Right cardiac atrium (tissue), 5 donors: ENCODE measurements at regions of chr17 and their contacts with region 1.

Region 1: DNA sequence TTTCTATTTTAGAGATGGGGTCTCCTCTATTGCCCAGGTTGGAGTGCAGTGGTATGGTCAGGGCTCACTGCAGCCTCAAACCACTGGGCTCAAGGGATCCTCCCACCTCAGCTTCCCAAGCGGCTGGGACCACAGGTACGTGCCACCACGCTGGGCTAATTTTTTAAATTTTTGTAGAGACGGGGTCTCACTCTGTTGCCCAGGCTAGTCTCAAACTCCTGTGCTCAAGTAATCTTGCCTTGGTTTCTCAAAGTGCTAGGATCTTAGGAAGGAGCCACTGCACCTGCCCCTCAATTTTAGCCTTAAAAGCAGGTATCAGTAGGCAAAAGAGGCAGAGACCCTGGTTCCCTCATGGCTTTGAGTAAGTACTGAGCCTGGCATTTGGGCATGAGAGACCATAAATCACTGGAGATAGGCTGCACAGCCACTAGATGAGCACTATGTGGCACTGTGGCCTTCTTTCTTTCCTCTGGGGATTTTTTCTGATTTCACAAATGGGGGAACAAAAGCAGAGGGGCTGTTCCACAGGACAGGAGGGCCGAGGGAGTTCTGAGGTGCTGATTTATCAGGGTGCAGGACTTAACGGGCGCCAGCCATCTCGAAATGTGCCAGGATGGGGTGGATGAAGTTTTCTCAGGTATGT is 82.2 kb downstream of the PLXDC1 start:
- DNase-seq: no peak
- ATAC-seq: peak; percentile 54 to 70
- H3K4me3 ChIP-seq: no peak overlapping the region
- H3K27ac ChIP-seq: no peak overlapping the region
- H3K4me1 ChIP-seq: no peaks in the 10 kb centered on the region
- H3K27me3 ChIP-seq: no peaks in the 10 kb centered on the region

Region 2: GRCh38 chr17:39144416-39144840 is 75.2 kb after region 1 on chr17:
- intact Hi-C with region 1: loop called in 1 of 4 experiments (anchors 5 kb)
- DNase-seq: peak; percentile 91 to 94 (median 92)
- ATAC-seq: peak; percentile 87
- H3K4me3 ChIP-seq: no peak overlapping the region
- H3K27ac ChIP-seq: peak overlapping the region; percentile 26
- H3K4me1 ChIP-seq: peaks cover 2% of the 10 kb centered on the region
- H3K27me3 ChIP-seq: no peaks in the 10 kb centered on the region

Region 3: DNA sequence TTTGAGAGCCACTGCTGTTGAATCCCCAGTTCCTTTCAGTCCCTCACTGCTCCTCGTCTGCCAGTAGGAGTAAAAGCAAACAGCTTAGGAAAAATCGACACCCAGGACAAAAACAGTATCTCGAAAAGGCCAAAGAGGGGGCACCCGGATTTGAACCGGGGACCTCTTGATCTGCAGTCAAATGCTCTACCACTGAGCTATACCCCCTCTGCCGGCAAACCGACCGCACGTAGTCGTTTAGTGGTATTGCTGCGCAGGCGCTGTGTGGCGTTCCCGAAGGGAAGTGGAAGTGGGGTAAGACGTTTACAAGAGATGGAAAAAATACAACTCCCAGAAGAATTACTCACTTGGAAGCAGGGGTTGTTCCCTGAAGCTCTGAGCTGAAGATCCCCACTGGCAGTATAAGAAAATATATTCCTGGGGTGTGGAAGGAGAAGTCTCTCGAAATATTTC is 84.4 kb after region 1 on chr17:
- intact Hi-C with region 1: loop called in 2 of 4 experiments (anchors 2 to 5 kb)
- DNase-seq: peak; percentile 85 to 97 (median 94)
- ATAC-seq: peak; percentile 87 to 89
- H3K4me3 ChIP-seq: peak overlapping the region; percentile 89
- H3K27ac ChIP-seq: peak overlapping the region; percentile 77
- H3K4me1 ChIP-seq: peaks cover 5% of the 10 kb centered on the region
- H3K27me3 ChIP-seq: no peaks in the 10 kb centered on the region